AG04449 (cell line): ENCODE measurements at regions of chr15 and their contacts with region 1.

Region 1: GRCh38 chr15:66841953-66842681 is 140.1 kb downstream of the SMAD6 start:
- DNase-seq: peak; percentile 59
- H3K4me3 ChIP-seq: peak overlapping the region; percentile 58
- CTCF ChIP-seq: no peak

Region 2: GRCh38 chr15:66789029-66790025 is 52.8 kb before region 1 on chr15:
- CTCF ChIA-PET with region 1: interaction called, 17 read pairs
- POLR2A ChIA-PET with region 1: no interaction called
- DNase-seq: no peak
- H3K4me3 ChIP-seq: no peak overlapping the region
- CTCF ChIP-seq: peak; percentile 65

Region 3: DNA sequence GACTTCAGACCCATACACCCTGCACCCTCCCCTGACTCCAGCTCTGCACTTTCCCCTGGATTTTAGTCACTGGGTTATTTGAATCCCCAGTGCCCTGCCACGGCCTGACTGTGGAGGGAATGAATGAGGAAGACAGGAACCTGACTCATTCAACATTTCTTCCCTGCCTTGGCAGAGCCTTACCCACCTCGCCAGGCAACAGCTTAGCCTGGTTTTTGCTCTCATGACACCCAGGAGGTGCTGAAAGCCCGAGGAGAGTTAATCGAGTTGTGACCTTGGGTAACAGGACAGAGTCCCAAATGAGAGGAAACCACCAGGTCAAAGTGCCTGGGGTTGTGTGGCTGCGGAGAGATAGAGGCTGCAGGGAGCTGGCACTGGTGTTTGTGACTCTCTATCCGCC is 11.8 kb before region 1 on chr15:
- CTCF ChIA-PET with region 1: interaction called, 14 read pairs
- POLR2A ChIA-PET with region 1: interaction called, 3 read pairs
- DNase-seq: no peak
- H3K4me3 ChIP-seq: no peak overlapping the region
- CTCF ChIP-seq: no peak

Region 4: GRCh38 chr15:66868918-66869317 is 26.8 kb after region 1 on chr15:
- CTCF ChIA-PET with region 1: no interaction called
- POLR2A ChIA-PET with region 1: no interaction called
- DNase-seq: no peak
- H3K4me3 ChIP-seq: no peak overlapping the region
- CTCF ChIP-seq: no peak